Activated CD4-positive, alpha-beta T cell treated with anti-CD3 and anti-CD28 coated beads for 36 hours (primary cell): ENCODE measurements at regions of chr16 and their contacts with region 1.

Region 1: DNA sequence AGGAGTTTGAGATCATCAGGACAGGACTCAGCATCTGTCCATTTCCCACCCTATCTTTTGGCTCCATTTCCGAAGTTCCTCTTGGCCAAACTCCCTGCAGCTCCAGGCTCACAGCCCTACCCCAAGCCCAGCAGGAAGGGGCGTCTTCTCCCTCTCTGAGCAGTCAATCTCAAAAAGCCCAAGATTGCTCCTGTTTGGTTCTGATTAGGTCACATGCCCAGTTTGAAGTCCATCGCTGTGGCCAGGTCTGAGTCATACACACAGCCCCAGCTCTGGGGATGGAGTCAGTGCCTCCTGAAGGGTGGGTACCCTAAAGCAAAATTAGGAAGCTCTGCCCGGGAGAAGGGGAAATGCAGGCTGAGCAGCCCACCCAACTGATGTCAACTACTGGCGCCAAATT is 23.9 kb downstream of the SNX20 start:
- DNase-seq: no peak
- ATAC-seq: no peak
- H3K4me3 Mint-ChIP-seq: no peak overlapping the region
- H3K27ac Mint-ChIP-seq: no peak overlapping the region
- H3K4me1 Mint-ChIP-seq: no peaks in the 10 kb centered on the region
- H3K27me3 Mint-ChIP-seq: no peaks in the 10 kb centered on the region

Region 2: GRCh38 chr16:50381679-50382440 is 275.4 kb before region 1 on chr16:
- CTCF ChIA-PET with region 1: no interaction called
- POLR2A ChIA-PET with region 1: no interaction called
- intact Hi-C with region 1: loop called in 1 of 2 experiments (anchors 5 kb)
- DNase-seq: peak; percentile 22
- ATAC-seq: no peak
- H3K4me3 Mint-ChIP-seq: no peak overlapping the region
- H3K27ac Mint-ChIP-seq: no peak overlapping the region
- H3K4me1 Mint-ChIP-seq: no peaks in the 10 kb centered on the region
- H3K27me3 Mint-ChIP-seq: no peaks in the 10 kb centered on the region

Region 3: DNA sequence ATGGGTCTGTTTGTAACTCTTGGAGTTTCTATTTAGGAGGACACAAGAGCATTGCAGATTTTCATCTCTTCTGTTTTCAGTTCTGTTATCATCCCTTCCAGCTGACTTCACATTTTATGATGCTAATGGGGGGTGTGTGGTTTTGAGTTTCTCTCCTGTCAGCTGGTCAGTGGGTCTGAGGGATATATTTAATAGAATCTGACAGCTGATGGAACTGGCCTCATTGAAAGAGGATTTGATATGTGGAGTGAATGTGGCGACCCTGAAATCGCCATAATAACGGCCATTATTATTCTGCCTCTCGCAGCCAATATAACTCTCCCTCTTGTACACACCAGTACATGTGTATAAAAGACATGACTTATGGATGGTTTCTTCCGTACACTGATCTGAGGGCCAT is 365.7 kb after region 1 on chr16:
- CTCF ChIA-PET with region 1: no interaction called
- POLR2A ChIA-PET with region 1: no interaction called
- intact Hi-C with region 1: no loop called
- DNase-seq: no peak
- ATAC-seq: no peak
- H3K4me3 Mint-ChIP-seq: no peak overlapping the region
- H3K27ac Mint-ChIP-seq: no peak overlapping the region
- H3K4me1 Mint-ChIP-seq: no peaks in the 10 kb centered on the region
- H3K27me3 Mint-ChIP-seq: peaks cover 16% of the 10 kb centered on the region